Sciatic nerve (tissue), 2 donors: ENCODE measurements at regions of chr5 and their contacts with region 1.

Region 1: GRCh38 chr5:95846554-95847260 is 24.2 kb upstream of the GLRX start:
- DNase-seq: peak; percentile 84
- ATAC-seq: peak; percentile 80

Region 2: GRCh38 chr5:95781101-95781583 is 65.6 kb before region 1 on chr5:
- intact Hi-C with region 1: loop called (anchors 5 kb)
- DNase-seq: peak; percentile 86
- ATAC-seq: peak; percentile 96

Region 3: DNA sequence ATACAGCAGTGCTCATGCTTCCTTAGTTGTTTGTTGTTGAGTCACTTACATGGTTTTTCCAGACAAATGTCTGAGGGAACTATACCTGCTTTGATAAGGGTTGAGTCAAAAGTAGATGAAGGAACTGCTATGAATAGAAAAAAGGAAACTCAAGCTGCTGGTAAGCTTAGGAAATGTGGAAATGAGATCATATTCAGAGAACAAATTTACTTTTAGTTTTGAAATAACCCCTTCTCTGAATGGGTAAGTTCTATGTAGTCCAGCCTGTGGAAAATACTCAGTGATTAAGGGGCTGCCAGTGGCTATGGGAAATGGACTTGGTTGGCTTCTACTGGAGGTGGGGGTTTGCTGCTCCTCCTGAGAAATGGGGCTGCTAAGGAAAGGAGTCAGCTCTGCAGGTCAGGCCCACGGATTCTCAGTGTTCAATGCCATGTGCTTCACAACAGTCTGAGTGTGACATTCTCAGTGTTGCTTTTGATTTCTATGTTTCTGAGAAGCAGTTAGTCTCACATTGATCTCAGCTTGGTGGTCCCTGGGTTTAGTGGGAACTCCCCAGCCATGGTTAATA is 23.5 kb after region 1 on chr5:
- intact Hi-C with region 1: no loop called
- DNase-seq: no peak
- ATAC-seq: peak; percentile 63